Activated naive CD4-positive, alpha-beta T cell treated with anti-CD3 and anti-CD28 coated beads for 36 hours (primary cell): ENCODE measurements at regions of chrX and their contacts with region 1.

Region 1: DNA sequence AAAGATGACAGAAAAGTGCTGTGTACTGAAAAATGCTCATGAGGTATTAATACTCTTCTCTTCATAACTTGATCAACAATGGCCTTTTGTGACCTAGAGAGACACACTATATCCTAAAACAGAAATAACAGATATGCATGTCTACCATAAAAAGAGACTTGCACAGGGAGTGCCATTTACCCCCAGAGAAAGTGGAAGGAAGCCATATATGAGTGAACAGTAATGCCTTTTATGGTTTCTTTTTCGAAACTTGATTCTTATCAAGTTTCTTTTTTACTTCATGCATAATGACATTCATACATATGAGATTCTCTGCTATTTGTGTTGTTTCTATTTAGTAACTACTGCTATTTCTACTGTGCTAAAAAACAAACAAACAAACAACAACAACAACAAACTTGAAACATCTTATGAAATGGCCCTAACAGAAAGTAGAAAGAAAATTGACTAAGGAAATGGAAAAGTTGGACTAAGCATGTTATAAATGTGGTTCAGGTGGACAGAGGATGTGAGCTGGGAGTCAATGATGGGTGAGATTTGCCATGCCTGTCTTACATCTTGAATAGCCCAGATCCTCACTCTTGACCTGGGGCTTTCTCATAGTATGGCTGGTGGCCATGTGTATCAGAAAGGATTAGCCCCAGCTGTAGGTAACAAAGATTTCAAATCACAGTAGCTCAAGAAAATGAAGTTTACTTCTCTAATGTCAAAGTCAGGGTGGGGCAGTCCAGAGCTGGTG is 43.8 kb downstream of the GEMIN8 start:
- DNase-seq: no peak
- H3K4me3 Mint-ChIP-seq: no peak overlapping the region
- H3K27ac Mint-ChIP-seq: no peak overlapping the region
- H3K4me1 Mint-ChIP-seq: peaks cover 3% of the 10 kb centered on the region
- H3K27me3 Mint-ChIP-seq: no peaks in the 10 kb centered on the region

Region 2: GRCh38 chrX:13966071-13966792 is 19.6 kb before region 1 on chrX:
- CTCF ChIA-PET with region 1: no interaction called
- intact Hi-C with region 1: loop called (anchors 2 kb)
- DNase-seq: no peak
- H3K4me3 Mint-ChIP-seq: no peak overlapping the region
- H3K27ac Mint-ChIP-seq: no peak overlapping the region
- H3K4me1 Mint-ChIP-seq: no peaks in the 10 kb centered on the region
- H3K27me3 Mint-ChIP-seq: no peaks in the 10 kb centered on the region